ENCODE measurements at regions of chr10 and their contacts with region 1.

Region 1: DNA sequence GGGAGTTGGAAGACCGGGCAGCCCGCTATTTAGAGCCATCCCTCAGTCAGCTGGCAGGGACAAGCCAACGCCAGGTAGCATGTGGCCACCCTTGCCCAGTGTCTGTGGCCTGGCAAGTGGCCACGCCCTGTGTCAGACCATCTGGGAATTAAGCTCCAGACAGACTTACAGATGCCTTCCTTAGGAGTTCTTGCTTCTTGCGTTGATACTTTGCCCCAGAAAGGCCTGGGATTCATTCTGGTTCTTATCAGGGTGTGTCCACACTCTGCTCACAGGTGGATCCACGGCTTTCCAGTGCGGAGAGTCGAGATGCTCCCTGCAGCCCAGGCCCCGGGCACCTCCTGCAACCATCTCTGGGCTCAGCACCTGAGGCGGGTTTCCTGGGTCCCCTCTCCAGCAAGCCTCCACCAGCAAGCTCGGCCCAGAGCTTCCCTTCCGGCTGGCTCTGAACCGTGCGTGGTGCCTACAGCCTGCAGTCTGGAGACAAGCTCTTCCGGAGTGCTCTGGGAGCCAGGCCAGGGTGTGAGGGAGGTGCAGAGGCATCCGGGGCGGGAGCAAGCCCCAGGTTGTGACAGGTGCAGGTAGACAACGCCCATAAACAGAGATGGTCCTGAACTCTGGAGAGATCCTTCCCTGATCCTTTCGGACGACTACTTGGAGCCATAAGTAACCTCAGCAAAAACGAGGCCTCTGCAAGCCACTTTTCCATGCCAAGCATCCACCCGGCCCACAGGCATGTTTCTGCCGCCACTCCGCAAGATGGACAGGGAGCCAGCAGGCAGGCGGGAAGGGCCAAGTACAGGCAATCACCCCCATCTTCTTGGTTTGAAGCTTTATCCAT is 32.3 kb upstream of the PPIF start:
- DNase-seq: peak in 1 of 2 experiments; percentile 62
- H3K4me3 ChIP-seq: no peak overlapping the region
- H3K27ac ChIP-seq: peak overlapping the region; percentile 27; the same call in 1 of the 2 replicates
- H3K4me1 ChIP-seq: peaks cover 40% of the 10 kb centered on the region
- H3K27me3 ChIP-seq: no peaks in the 10 kb centered on the region
- CTCF ChIP-seq: no peak

Region 2: GRCh38 chr10:78053211-78053868 is 1261.6 kb before region 1 on chr10:
- CTCF ChIA-PET with region 1: no interaction called
- POLR2A ChIA-PET with region 1: no interaction called
- intact Hi-C with region 1: no loop called
- DNase-seq: no peak
- H3K4me3 ChIP-seq: no peak overlapping the region
- H3K27ac ChIP-seq: no peak overlapping the region
- H3K4me1 ChIP-seq: no peaks in the 10 kb centered on the region
- H3K27me3 ChIP-seq: no peaks in the 10 kb centered on the region
- CTCF ChIP-seq: no peak

Region 3: GRCh38 chr10:79112881-79113431 is 202.0 kb before region 1 on chr10:
- CTCF ChIA-PET with region 1: no interaction called
- POLR2A ChIA-PET with region 1: no interaction called
- intact Hi-C with region 1: no loop called
- DNase-seq: no peak
- H3K4me3 ChIP-seq: no peak overlapping the region
- H3K27ac ChIP-seq: no peak overlapping the region
- H3K4me1 ChIP-seq: peaks cover 6% of the 10 kb centered on the region; the same call in 1 of the 2 replicates
- H3K27me3 ChIP-seq: no peaks in the 10 kb centered on the region
- CTCF ChIP-seq: no peak

Region 4: DNA sequence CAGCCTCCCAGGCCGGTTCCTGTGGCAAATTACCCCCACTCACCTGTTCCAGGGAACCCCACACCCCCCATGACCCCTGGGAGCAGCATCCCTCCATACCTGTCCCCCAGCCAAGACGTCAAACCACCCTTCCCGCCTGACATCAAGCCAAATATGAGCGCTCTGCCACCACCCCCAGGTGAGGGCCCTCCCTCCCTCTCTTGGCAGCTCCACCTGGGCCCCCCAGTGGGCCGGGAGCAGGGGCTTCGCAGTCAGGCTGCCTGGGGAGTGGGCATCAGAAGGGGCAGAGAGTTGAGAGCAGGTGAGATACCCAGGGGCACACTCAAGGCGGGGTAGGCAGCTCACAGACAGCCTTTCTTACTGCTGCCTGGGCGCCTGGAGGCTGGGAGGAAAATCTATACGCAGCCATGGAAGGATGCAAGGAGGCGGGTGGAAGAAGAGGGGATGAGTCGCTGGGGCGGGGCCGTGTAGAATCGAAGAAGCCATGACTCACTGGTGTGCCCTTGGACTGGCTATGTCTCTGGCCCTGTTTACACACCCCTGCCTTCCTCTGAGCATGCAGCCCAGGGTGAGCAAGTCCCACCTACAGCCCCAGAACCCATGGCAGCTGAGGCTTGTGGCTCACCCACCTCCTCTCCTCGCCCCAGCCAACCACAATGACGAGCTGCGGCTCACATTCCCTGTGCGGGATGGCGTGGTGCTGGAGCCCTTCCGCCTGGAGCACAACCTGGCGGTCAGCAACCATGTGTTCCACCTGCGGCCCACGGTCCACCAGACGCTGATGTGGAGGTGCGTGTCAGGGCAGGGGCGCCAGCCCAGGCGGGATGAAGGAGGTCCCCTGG is 16.4 kb before region 1 on chr10:
- CTCF ChIA-PET with region 1: interaction called, 3 read pairs
- POLR2A ChIA-PET with region 1: no interaction called
- intact Hi-C with region 1: loop called (anchors 1 kb)
- DNase-seq: peak; percentile 85 to 92
- H3K4me3 ChIP-seq: no peak overlapping the region
- H3K27ac ChIP-seq: peak overlapping the region; percentile 85
- H3K4me1 ChIP-seq: peaks cover 52% of the 10 kb centered on the region
- H3K27me3 ChIP-seq: no peaks in the 10 kb centered on the region
- CTCF ChIP-seq: no peak